ENCODE measurements at regions of chr14 and their contacts with region 1.

Region 1: GRCh38 chr14:36655963-36656686 is 5.5 kb upstream of the PAX9 start:
- DNase-seq: peak; percentile 84
- ATAC-seq: peak; percentile 43
- H3K4me3 Mint-ChIP-seq: peak overlapping the region; percentile 55
- H3K27ac Mint-ChIP-seq: no peak overlapping the region
- H3K4me1 Mint-ChIP-seq: peaks cover 48% of the 10 kb centered on the region
- H3K27me3 Mint-ChIP-seq: peaks cover 100% of the 10 kb centered on the region
- CTCF ChIP-seq: peak; percentile 88

Region 2: DNA sequence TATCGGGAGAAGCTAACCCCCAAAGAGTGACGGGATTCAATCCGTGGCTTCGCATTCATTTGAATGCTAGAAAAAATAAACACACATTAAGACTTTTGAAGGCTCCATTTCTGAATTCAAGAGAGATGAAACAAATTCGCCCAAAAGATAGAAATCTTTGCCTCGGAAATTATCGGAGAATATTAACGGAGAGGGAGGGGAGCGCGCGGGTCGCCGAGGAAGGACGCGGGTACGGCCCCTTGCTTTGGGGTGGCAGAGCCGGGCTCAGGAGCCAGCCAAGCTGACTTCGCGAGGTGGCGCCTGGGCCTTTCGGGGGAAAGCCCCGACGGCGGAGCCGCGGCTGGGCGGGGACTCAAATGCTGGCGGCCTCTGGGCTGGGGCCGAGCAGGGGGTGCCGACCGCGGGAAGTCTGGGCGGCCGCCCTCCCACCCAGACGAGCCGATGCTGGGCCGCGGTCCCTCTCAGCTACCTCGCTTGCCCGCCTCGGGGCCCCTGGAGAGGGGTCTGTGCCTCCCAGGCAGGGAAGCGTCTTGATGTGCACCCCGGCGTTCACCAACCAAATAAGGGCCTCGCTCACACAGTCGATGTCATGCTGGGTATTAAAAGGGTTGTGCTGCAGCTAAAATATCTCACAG is 150.8 kb before region 1 on chr14:
- CTCF ChIA-PET with region 1: interaction called, 12 read pairs
- POLR2A ChIA-PET with region 1: no interaction called
- DNase-seq: peak; percentile 60
- ATAC-seq: peak; percentile 30
- H3K4me3 Mint-ChIP-seq: peak overlapping the region; percentile 65
- H3K27ac Mint-ChIP-seq: no peak overlapping the region
- H3K4me1 Mint-ChIP-seq: peaks cover 56% of the 10 kb centered on the region
- H3K27me3 Mint-ChIP-seq: peaks cover 100% of the 10 kb centered on the region
- CTCF ChIP-seq: no peak

Region 3: DNA sequence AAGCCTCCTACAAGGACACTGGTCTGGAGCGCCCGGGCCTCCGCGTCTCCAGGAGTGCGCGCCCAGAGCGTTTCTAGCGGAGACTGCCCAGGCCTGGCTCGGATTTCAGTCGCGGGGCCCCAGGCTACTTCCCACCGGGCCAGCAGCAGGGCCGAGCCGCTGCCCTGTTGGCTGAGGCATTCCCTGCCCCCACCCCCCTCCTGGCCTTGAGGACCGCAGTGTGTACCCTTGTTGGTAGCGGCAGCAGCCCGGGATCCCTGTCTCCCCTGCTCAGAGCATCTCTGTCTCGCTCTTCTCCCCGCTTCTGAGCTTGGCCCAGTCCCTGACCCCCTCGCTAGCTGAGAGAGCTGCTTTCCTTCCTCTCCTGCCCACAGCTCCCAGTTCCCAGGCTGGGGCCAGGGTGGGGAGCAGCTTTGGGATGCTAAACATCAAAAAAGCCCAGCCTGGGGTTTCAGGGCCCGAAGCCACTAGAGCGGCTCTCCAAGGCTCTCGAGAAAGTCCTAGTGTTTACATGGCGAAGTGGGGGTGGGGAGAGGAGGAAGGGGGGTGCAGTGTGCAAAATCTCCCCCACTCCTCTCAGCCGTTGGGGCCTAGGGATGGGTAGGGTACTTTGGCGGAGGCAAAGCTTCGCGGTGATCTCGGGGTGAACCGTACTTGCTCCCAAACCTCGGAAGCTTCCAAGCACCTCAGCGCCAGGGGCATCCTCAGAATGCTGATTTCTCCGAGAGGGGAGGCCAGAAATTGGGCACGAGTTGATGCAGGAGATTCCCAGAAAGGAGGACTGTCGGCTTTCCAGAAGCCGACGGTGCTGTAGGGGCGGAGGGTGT is 142.5 kb before region 1 on chr14:
- CTCF ChIA-PET with region 1: interaction called, 20 read pairs
- POLR2A ChIA-PET with region 1: no interaction called
- DNase-seq: peak; percentile 84
- ATAC-seq: peak; percentile 52
- H3K4me3 Mint-ChIP-seq: peak overlapping the region; percentile 38
- H3K27ac Mint-ChIP-seq: no peak overlapping the region
- H3K4me1 Mint-ChIP-seq: peaks cover 57% of the 10 kb centered on the region
- H3K27me3 Mint-ChIP-seq: peaks cover 97% of the 10 kb centered on the region
- CTCF ChIP-seq: no peak

Region 4: GRCh38 chr14:36580856-36581831 is 75.0 kb before region 1 on chr14:
- CTCF ChIA-PET with region 1: interaction called, 19 read pairs
- POLR2A ChIA-PET with region 1: no interaction called
- DNase-seq: peak; percentile 61
- ATAC-seq: peak; percentile 52
- H3K4me3 Mint-ChIP-seq: peak overlapping the region; percentile 60
- H3K27ac Mint-ChIP-seq: no peak overlapping the region
- H3K4me1 Mint-ChIP-seq: peaks cover 29% of the 10 kb centered on the region
- H3K27me3 Mint-ChIP-seq: no peaks in the 10 kb centered on the region; the same call in 1 of the 2 replicates
- CTCF ChIP-seq: no peak